ENCODE measurements at regions of chr15 and their contacts with region 1.

Region 1: DNA sequence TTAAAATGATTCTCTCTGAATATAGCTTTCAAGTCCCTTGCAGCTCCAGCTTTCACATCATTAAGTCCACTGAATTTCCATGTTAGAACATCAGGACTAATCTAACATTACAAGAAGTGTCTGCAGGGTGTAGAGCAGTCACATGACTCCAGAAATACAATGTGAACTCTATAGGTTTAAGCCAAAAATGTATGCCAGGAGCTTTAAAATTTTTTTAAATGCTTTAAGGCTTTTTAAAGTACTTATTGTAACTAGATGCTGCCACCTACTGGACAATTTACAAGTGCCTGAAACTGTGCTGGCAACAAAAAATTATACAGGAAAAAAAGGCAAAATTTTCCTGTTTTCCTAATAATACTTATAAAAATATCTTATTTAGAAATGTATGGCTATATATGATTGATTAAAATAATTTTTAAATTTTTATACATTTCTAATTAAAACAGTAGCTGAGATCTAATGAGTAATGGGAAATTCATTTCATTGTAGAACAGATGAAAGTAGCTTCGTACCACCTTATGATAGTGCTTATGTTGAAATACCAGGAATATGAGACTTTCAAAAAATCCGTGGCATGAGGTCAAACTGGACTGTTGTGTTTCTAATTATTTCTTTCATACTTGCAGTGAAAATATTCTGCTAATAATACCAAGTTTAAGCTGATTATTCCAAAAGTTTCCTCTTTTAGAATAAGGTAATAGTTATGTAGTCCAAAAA is 25.7 kb downstream of the FSIP1 start:
- DNase-seq: peak; percentile 43
- H3K4me3 ChIP-seq: no peak overlapping the region
- H3K27ac ChIP-seq: no peak overlapping the region
- H3K27me3 ChIP-seq: no peaks in the 10 kb centered on the region
- CTCF ChIP-seq: peak; percentile 77

Region 2: DNA sequence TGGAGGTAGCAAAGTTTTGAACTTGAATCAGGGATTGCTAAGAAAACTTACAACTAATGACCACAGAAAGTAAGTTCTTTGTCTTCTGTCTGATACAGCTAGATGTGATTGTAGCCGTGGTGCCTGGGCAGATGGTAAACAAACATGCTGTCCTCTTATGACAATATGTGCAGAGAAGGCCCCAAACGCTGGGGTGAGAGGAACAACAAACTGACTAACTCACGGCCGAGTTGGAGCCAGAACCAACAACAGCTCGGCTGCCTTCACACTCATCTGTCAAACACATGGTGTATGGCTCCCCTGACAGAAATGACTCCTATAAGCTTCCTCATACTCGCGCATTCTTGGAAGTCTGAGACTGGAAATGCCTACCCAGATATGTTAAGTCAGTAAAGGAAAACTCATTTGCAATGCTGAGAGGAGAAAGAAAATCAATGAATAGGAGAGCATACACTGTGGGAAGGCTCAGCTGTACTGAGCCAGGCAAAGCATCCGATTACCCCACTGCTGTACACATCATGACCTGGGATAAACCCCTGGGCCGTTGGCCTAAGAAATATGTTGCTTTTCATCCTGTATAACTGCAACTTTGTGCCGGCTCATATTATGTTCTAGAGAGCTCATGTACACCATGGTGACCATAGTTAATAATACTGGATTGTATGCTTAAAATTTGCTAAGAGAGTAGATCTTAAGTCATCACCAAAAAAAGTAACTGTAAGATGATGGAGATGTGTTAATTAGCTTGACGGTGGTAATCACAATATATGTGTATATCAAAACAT is 170.4 kb before region 1 on chr15:
- CTCF ChIA-PET with region 1: interaction called, 14 read pairs
- POLR2A ChIA-PET with region 1: interaction called, 4 read pairs
- DNase-seq: no peak
- H3K4me3 ChIP-seq: peak overlapping the region; percentile 99
- H3K27ac ChIP-seq: peak overlapping the region; percentile 12
- H3K27me3 ChIP-seq: no peaks in the 10 kb centered on the region
- CTCF ChIP-seq: no peak

Region 3: GRCh38 chr15:39625856-39626255 is 131.1 kb before region 1 on chr15:
- CTCF ChIA-PET with region 1: interaction called, 11 read pairs
- POLR2A ChIA-PET with region 1: no interaction called
- DNase-seq: no peak
- H3K4me3 ChIP-seq: no peak overlapping the region
- H3K27ac ChIP-seq: no peak overlapping the region
- H3K27me3 ChIP-seq: no peaks in the 10 kb centered on the region
- CTCF ChIP-seq: no peak

Region 4: GRCh38 chr15:39686000-39686613 is 70.9 kb before region 1 on chr15:
- CTCF ChIA-PET with region 1: interaction called, 143 read pairs
- POLR2A ChIA-PET with region 1: no interaction called
- DNase-seq: peak; percentile 37
- H3K4me3 ChIP-seq: no peak overlapping the region
- H3K27ac ChIP-seq: no peak overlapping the region
- H3K27me3 ChIP-seq: no peaks in the 10 kb centered on the region
- CTCF ChIP-seq: peak; percentile 80

Region 5: DNA sequence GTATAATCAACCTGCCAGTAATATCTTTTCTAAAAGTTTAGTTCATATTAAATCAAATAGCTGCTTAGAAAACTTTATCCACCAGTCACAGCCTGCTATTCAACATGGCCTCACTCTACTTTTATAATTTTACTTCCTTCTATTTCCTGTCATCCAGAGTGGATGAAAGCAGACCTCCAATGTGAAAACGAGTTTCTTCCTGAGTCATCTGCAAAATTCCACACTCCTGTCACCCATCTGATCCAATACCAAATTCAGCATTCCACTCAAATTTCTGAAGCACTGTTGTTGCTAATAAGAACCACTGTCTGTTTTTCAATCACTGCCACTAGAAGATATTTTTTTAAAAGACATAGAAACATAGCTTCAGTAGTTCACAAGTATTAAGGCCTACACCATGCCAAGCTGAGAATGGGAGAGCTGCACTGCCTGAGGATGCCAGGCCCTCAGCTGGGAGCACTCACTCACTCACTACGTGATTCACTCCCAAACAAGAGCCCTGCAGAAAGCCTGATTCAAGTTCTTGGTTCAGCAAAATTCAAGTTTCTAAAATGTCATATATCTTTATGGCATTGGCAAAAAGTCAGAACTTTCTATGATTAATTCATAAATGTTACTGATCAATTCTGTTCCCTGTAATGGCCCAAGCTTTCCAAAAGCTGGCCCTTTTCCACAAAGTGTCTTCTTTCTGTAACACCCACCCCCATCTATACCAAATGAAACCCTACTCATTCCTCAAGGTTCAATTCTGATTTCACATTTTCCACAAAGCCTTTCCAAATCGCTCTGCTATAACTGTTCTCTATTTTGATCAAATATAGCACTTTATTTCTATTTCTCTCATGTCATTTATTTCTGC is 57.2 kb before region 1 on chr15:
- CTCF ChIA-PET with region 1: interaction called, 11 read pairs
- POLR2A ChIA-PET with region 1: no interaction called
- DNase-seq: no peak
- H3K4me3 ChIP-seq: no peak overlapping the region
- H3K27ac ChIP-seq: no peak overlapping the region
- H3K27me3 ChIP-seq: no peaks in the 10 kb centered on the region
- CTCF ChIP-seq: no peak

Region 6: DNA sequence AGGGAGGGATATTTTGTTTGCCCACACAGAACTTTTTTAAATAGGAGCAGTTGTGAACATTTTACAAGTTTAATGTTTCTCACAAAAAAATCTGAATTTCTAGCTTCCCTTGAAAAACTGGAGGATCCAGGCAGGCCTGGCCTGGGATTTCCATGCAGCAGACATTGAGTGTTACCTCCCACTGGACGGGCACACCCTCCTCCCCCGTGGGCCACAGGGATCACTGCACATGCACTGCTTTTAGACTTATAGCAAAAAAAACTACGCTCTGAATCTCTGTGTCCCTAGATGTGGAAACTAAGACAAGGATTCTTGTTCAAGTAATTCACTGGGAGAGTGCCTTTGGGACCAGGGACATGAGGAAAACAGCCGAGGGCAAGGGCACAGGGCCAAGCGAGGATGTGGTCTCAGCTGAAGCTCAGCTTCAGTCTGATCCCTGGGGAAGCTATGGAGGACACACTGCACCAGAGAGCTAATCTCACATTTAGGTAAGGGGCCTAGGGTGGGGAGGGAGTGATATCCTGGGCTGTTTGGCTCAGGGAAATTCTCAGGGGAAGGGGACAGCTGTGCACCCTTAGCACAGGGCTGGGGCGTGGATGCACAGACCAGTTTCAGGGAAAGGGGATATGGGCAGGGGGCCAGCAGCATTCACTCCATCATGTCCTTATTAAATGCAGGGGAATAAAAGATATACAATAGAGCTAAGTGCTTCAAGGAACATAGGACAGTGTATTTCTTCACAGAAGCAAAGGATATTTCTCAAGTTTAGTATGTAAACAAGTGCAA is 20.4 kb before region 1 on chr15:
- CTCF ChIA-PET with region 1: interaction called, 28 read pairs
- POLR2A ChIA-PET with region 1: no interaction called
- DNase-seq: no peak
- H3K4me3 ChIP-seq: no peak overlapping the region
- H3K27ac ChIP-seq: no peak overlapping the region
- H3K27me3 ChIP-seq: no peaks in the 10 kb centered on the region
- CTCF ChIP-seq: no peak

Region 7: DNA sequence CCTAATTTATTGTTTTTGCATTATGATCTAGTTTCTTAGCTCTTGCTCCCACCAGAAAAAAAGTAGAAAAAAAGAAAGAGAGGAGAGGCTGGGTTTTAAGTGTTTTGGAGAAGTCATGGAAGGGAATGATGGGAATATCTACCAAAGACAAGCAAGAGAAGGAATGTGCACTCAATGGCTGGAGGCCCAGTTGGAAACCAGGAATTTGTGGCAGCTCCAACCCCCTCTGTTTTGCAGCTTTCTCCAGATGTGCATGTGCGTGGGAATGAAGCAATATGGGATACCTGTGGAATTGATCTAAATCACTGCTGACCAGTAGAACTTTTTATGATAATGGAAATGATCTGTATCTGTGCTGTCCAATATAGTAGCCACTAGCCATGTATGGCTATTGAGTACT is 204.1 kb after region 1 on chr15:
- CTCF ChIA-PET with region 1: no interaction called
- POLR2A ChIA-PET with region 1: no interaction called
- DNase-seq: no peak
- H3K4me3 ChIP-seq: no peak overlapping the region
- H3K27ac ChIP-seq: no peak overlapping the region
- H3K27me3 ChIP-seq: no peaks in the 10 kb centered on the region
- CTCF ChIP-seq: no peak